Cardiac septum (tissue), 1 donor: ENCODE measurements at regions of chr11 and their contacts with region 1.

Region 1: GRCh38 chr11:93652161-93652597 is 9.3 kb upstream of the CEP295 start:
- DNase-seq: no peak

Region 2: DNA sequence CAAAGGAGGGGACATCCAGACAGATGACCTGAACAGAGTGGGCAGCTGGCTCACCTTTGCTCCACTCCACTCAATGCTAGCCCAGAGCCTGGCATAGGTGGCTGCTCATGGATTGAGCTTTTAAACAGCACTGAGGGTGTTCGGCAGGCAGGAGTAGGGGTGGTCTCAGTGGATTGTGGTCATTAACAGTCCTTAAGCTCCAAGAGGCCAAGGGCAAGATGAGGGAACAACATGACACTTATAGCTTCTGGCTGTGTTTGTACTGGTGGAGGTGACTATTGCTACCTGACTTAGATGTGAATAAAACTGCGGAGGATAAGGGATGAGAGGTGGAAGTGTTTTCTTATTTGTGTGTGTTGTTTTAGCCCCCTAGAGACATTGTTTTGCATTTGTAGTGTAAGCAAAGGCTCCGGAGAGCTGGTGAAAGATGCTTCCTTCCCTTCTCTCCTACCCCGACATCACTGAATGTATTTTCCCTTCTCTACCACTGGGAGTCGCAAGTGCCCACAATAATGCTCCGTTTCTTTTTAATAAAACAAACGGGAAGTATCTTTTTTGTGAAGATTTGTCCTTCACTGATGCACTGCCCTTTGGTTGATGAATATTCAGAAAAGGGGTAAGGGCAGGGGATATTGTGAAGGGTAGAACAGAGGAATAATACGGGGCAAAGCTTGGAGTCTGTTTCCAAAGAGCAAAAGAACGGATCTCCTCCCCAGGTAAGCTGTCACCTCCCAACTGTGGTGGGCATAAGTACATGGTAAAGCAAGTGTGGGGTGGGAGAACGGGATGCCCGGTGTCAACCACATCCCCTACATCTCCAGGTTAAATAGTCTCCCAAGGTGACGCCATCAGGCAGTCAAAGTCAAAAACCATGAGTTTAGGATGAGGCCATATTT is 710.3 kb before region 1 on chr11:
- intact Hi-C with region 1: loop called (anchors 10 kb)
- DNase-seq: no peak

Region 3: DNA sequence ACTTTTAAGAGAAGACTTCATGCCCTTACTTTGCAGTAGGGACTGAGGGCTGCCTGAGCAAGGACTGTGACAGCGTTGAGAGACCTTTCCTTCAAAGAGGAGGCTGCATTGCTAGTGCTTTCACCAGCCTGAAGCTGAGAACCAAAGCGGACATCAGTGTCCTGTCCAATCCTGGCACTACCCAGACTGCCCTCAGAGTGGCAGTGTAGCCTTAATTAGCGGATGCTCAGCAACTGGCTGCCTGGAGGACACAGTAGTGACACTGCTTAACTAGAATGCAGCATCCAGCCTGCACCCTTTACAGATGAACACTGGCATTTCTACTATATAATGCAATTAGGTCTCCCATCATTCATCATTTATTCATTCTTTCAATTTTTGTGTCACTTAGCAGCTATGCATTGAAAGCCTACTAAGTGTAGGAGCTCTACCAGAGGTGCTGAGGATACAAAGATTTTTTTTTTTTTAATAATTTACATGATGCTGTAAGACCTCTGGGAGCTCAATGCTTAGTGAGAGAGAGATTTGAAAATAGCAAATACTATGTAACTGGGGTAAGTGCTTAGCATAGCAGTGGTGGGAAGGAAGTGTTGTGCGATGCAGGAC is 417.5 kb before region 1 on chr11:
- intact Hi-C with region 1: loop called (anchors 2 kb)
- DNase-seq: peak; percentile 78

Region 4: DNA sequence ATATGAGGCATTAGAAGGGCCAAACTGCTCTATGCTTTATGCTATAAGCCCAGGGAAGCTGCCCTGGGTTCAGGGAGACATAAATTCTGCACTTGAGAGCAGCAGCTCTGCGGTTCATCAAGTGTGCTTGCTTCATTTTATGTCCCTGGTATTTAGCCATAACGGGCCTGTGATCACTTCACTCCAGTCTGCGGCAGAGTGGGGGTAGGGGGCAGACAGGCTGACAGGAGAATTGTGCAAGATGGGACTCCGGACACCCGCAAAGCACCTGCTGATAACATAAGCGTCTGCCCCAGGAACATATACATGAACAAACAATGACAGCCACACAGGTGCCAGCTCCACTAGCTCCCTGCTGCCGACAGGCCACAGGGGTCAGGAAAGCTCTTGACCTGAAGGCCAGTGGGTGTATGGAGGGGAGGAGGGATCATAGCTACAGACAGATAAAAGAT is 165.1 kb before region 1 on chr11:
- intact Hi-C with region 1: loop called (anchors 10 kb)
- DNase-seq: no peak

Region 5: DNA sequence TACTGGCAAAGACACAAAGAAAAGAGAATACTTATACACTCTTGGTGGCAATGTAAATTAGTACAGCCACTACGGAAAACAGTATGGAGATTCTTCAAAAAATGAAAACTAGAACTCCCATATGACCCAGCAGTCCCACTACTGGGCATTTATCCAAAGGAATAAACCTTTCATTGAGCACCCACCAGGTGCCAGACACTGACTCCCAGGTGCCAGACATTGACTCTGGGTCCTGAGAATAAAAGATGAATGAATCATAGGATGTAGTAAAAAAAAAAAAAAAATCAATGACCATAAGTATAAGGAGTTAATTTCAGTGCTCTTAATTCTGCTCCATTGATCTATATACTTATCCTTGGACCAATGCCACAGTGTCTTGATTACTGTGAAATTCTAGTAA is 397.2 kb after region 1 on chr11:
- intact Hi-C with region 1: no loop called
- DNase-seq: no peak